Activated CD4-positive, alpha-beta T cell treated with anti-CD3 and anti-CD28 coated beads for 36 hours (primary cell): ENCODE measurements at regions of chr19 and their contacts with region 1.

Region 1: GRCh38 chr19:10565567-10566407 is at the start of gene KRI1:
- DNase-seq: peak; percentile 100
- ATAC-seq: peak; percentile 39
- H3K4me3 Mint-ChIP-seq: peak within 1 kb of the TSS; percentile 98
- H3K27ac Mint-ChIP-seq: peak within 1 kb of the TSS; percentile 94
- H3K4me1 Mint-ChIP-seq: peaks cover 34% of the 10 kb centered on the region
- H3K27me3 Mint-ChIP-seq: no peaks in the 10 kb centered on the region
- total RNA-seq, gene KRI1: 62.5 to 67.1 TPM

Region 2: DNA sequence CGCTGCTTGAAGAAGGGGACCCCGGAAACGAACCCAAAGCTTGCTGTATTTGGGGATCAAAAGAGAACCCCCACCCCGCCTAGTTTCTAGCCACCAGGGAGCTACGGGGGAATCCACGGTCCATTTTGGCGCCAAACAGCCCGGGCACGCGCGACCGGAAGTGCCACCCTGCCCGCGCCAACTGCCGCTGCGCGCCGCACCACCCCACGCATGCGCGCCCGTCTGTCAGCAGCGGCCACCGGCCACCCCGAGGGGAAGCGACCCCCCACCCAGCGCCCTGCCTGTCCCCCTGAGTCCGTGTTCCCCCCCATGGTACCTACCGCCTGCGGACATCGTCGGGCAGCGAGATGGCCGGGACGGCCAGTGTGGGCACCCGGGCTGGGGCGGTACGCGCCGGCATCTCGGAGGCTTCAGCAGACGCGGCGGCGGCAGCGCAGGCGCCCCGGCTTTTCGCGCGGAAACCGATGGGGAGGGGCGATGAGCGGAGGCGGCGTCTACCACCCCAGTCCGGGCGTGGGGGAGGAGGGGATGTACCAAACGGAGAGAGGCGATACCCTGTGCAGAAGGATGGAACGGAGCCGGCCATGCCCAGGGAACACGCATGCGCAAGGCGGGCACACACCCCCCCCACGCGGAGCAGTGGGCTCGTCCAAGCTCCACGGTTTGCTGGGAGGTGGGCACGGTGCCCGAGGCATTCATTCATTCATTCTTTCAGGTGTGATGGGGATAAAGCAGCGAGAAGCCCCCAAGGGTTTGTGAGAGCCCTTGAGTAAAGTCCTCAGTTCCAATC is 371.1 kb before region 1 on chr19 and contains the start of gene DNMT1:
- CTCF ChIA-PET with region 1: no interaction called
- POLR2A ChIA-PET with region 1: no interaction called
- intact Hi-C with region 1: loop called in 1 of 2 experiments (anchors 2 kb)
- DNase-seq: peak; percentile 99
- ATAC-seq: peak; percentile 94
- H3K4me3 Mint-ChIP-seq: peak within 1 kb of the TSS; percentile 89
- H3K27ac Mint-ChIP-seq: peak within 1 kb of the TSS; percentile 97
- H3K4me1 Mint-ChIP-seq: peaks cover 49% of the 10 kb centered on the region
- H3K27me3 Mint-ChIP-seq: no peaks in the 10 kb centered on the region
- total RNA-seq, gene DNMT1: 374 to 385 TPM

Region 3: GRCh38 chr19:10363789-10364281 is 202.0 kb before region 1 on chr19:
- CTCF ChIA-PET with region 1: no interaction called
- POLR2A ChIA-PET with region 1: no interaction called
- intact Hi-C with region 1: no loop called
- DNase-seq: no peak
- ATAC-seq: peak; percentile 12
- H3K4me3 Mint-ChIP-seq: no peak overlapping the region
- H3K27ac Mint-ChIP-seq: no peak overlapping the region
- H3K4me1 Mint-ChIP-seq: no peaks in the 10 kb centered on the region
- H3K27me3 Mint-ChIP-seq: no peaks in the 10 kb centered on the region

Region 4: GRCh38 chr19:10403137-10404021 is 162.4 kb before region 1 on chr19 and contains the start of gene CDC37:
- CTCF ChIA-PET with region 1: interaction called, 6 read pairs
- POLR2A ChIA-PET with region 1: no interaction called
- intact Hi-C with region 1: loop called (anchors 1 to 2 kb)
- DNase-seq: peak; percentile 99
- ATAC-seq: peak; percentile 79
- H3K4me3 Mint-ChIP-seq: peak within 1 kb of the TSS; percentile 94
- H3K27ac Mint-ChIP-seq: peak within 1 kb of the TSS; percentile 87
- H3K4me1 Mint-ChIP-seq: peaks cover 61% of the 10 kb centered on the region
- H3K27me3 Mint-ChIP-seq: no peaks in the 10 kb centered on the region
- total RNA-seq, gene CDC37: 178 to 190 TPM

Region 5: GRCh38 chr19:10551698-10552301 is 14.0 kb before region 1 on chr19:
- CTCF ChIA-PET with region 1: interaction called, 10 read pairs
- POLR2A ChIA-PET with region 1: interaction called, 6 read pairs
- intact Hi-C with region 1: loop called in 1 of 2 experiments (anchors 1 kb)
- DNase-seq: peak; percentile 76
- ATAC-seq: peak; percentile 47
- H3K4me3 Mint-ChIP-seq: no peak overlapping the region
- H3K27ac Mint-ChIP-seq: no peak overlapping the region
- H3K4me1 Mint-ChIP-seq: peaks cover 38% of the 10 kb centered on the region
- H3K27me3 Mint-ChIP-seq: no peaks in the 10 kb centered on the region

Region 6: DNA sequence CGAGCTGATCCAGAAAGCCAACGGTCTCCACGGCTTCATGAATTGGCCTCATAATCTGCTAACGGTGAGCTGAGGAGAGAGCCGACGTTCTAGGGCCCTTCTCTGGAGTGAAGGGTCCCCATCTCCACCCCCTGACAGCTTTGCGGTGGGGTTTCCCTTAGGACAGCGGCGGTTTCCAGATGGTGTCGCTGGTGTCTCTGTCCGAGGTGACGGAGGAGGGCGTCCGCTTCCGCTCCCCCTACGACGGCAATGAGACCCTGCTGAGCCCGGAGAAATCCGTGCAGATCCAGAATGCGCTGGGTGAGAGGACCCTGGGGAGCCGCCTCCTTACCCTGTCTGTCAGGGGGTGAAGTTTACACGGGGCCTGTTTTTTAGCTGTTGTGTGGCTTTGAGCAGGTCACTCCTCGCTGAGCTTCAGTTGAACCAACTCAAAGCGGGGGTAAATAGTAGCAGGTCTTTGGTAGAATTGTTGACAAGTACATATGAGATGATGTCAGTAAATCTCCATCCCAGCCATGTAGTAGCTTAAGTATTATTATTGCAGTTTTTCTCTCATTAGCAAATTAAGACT is 136.3 kb after region 1 on chr19:
- CTCF ChIA-PET with region 1: interaction called, 7 read pairs
- POLR2A ChIA-PET with region 1: no interaction called
- intact Hi-C with region 1: loop called (anchors 1 to 5 kb)
- DNase-seq: peak; percentile 60
- ATAC-seq: peak; percentile 43
- H3K4me3 Mint-ChIP-seq: peak overlapping the region; percentile 91
- H3K27ac Mint-ChIP-seq: peak overlapping the region; percentile 74
- H3K4me1 Mint-ChIP-seq: peaks cover 10% of the 10 kb centered on the region
- H3K27me3 Mint-ChIP-seq: no peaks in the 10 kb centered on the region

Region 7: GRCh38 chr19:10870955-10871603 is 305.3 kb after region 1 on chr19 and contains the start of gene CARM1:
- CTCF ChIA-PET with region 1: interaction called, 3 read pairs
- POLR2A ChIA-PET with region 1: no interaction called
- intact Hi-C with region 1: loop called in 1 of 2 experiments (anchors 1 kb)
- DNase-seq: peak; percentile 100
- ATAC-seq: peak; percentile 88
- H3K4me3 Mint-ChIP-seq: peak within 1 kb of the TSS; percentile 80
- H3K27ac Mint-ChIP-seq: peak within 1 kb of the TSS; percentile 97
- H3K4me1 Mint-ChIP-seq: peaks cover 28% of the 10 kb centered on the region
- H3K27me3 Mint-ChIP-seq: no peaks in the 10 kb centered on the region
- total RNA-seq, gene CARM1: 82.3 to 96.8 TPM

Region 8: GRCh38 chr19:11064831-11065303 is 499.1 kb after region 1 on chr19:
- CTCF ChIA-PET with region 1: no interaction called
- POLR2A ChIA-PET with region 1: no interaction called
- intact Hi-C with region 1: no loop called
- DNase-seq: no peak
- ATAC-seq: no peak
- H3K4me3 Mint-ChIP-seq: no peak overlapping the region
- H3K27ac Mint-ChIP-seq: no peak overlapping the region
- H3K4me1 Mint-ChIP-seq: no peaks in the 10 kb centered on the region
- H3K27me3 Mint-ChIP-seq: no peaks in the 10 kb centered on the region

Region 9: DNA sequence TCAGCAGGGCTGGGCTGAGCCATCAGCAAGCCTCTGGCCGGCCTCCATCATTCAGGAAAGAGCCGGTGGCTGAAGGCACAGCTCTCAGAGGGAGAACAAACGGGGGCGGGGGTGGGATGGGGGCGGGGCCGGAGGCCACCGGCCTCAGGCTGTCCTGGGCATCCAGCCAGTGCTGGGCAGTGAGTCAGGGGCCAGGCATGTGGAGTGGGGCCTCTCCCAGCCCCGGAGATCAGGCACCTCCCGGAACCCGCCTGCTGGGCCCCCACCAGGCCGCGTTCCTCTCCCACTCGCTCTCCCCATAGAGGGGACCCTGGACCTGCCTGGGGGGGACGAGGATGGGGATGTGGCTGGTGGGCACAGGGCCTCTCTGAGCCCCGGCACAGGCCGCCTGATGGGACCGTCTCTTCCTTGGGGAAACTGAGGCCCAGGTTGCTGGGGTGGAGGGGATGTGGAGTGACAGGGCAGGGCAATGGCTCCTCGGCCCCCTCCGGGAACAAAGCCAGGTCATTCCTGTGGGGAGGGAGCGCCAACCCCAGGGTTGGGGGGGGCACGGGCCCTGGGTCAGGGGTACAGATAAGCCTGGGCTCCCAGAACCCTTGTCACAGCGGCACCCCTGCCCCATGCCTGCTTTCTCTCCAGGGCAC is 576.9 kb after region 1 on chr19:
- CTCF ChIA-PET with region 1: no interaction called
- POLR2A ChIA-PET with region 1: no interaction called
- intact Hi-C with region 1: no loop called
- DNase-seq: no peak
- ATAC-seq: no peak
- H3K4me3 Mint-ChIP-seq: no peak overlapping the region
- H3K27ac Mint-ChIP-seq: no peak overlapping the region
- H3K4me1 Mint-ChIP-seq: peaks cover 11% of the 10 kb centered on the region
- H3K27me3 Mint-ChIP-seq: no peaks in the 10 kb centered on the region